ENCODE measurements at regions of chr15 and their contacts with region 1.

Region 1: DNA sequence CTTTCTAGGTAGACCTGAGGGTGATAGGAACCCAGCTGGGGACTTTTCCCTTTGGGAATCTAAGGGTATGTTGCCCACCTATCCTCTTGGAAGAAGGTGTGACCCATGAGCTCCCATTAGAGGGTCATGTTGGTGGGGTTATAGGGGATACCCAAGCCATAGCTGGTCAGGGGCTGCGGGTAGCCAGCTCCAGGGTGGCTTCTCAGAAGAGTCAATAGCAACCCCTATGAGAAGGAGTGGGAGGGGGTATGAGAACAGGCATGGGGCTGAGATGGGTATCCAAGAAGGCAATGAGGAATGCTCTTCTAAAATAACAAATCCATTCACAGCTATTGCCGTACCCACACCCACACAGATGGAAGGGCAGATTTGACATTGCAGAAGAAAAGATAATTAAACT is 217.8 kb downstream of the UACA start:
- DNase-seq: no peak
- H3K4me3 Mint-ChIP-seq: no peak overlapping the region
- H3K27ac Mint-ChIP-seq: no peak overlapping the region
- H3K4me1 Mint-ChIP-seq: peaks cover 31% of the 10 kb centered on the region
- H3K27me3 Mint-ChIP-seq: peaks cover 12% of the 10 kb centered on the region

Region 2: DNA sequence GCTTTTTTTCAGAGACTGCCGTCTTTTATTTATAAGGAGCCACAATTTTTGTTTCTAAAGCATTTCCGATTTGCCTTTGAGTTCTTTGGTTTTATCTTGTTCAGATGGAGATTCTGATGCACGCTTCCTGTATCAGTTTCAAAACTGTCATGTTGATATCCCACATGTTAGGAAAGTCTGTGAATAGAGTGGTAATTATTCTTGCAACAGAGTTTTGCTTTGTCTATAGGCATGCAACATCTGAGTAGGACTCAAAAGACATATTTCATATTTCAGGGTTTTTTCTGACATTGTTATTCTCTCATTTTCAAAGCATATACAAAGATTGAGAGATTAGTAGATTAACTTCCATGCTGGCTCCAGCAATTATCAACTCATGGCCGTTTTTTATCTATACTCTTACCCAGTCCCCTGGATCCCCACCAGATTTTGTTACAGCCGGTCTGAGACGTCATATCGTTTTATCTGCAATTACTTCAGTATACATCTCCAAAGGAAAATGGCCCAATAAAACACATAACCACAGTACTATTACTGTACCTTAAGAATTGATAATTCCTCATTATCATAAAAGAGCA is 1224.5 kb before region 1 on chr15:
- intact Hi-C with region 1: loop called (anchors 5 kb)
- DNase-seq: no peak
- H3K4me3 Mint-ChIP-seq: no peak overlapping the region
- H3K27ac Mint-ChIP-seq: peak overlapping the region; percentile 50
- H3K4me1 Mint-ChIP-seq: peaks cover 21% of the 10 kb centered on the region
- H3K27me3 Mint-ChIP-seq: peaks cover 40% of the 10 kb centered on the region

Region 3: DNA sequence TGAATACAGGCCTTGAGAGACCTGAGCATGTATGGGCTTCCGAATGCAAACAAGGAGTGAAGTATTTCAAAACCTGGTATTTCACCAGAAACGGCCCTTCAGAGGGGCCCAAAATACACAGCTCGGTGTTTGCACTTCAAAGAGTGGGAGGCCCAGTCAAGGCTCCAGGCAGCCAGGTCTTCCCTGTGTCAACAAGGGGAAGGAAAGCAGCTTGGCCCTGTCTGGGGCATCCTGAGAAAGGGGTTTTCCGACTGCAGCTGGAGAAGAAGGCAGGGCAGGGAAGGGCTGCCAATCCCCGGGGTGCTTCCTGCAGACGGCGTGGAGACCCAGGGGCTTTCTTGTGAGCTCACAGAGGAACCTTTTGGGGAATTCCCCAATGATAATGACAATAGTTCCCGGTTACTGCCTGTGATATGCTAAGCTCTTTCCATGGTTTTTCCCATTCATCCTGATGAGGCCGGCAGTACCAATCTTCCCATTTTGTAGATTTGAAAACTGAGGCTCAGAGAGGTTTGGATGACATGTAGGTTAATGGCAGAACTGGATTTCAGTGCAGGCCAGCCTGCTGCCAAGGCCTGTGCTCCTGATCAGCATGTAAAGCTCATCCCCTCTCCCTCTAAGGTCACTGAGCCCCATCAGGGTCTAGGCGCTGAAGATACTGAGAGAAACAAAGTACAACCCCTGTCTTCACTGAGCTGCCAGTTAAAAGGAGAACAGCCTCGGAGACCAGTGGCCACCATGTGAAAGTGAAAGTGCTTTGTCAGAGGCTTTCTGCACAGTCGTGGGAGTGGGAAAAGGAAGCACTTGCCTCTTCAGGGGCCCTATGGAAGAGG is 404.8 kb before region 1 on chr15:
- intact Hi-C with region 1: loop called (anchors 1 kb)
- DNase-seq: no peak
- H3K4me3 Mint-ChIP-seq: no peak overlapping the region
- H3K27ac Mint-ChIP-seq: peak overlapping the region; percentile 40
- H3K4me1 Mint-ChIP-seq: peaks cover 34% of the 10 kb centered on the region
- H3K27me3 Mint-ChIP-seq: peaks cover 56% of the 10 kb centered on the region

Region 4: GRCh38 chr15:70463460-70463881 is 82.1 kb before region 1 on chr15:
- intact Hi-C with region 1: no loop called
- DNase-seq: no peak
- H3K4me3 Mint-ChIP-seq: no peak overlapping the region
- H3K27ac Mint-ChIP-seq: no peak overlapping the region
- H3K4me1 Mint-ChIP-seq: peaks cover 16% of the 10 kb centered on the region
- H3K27me3 Mint-ChIP-seq: peaks cover 74% of the 10 kb centered on the region

Region 5: DNA sequence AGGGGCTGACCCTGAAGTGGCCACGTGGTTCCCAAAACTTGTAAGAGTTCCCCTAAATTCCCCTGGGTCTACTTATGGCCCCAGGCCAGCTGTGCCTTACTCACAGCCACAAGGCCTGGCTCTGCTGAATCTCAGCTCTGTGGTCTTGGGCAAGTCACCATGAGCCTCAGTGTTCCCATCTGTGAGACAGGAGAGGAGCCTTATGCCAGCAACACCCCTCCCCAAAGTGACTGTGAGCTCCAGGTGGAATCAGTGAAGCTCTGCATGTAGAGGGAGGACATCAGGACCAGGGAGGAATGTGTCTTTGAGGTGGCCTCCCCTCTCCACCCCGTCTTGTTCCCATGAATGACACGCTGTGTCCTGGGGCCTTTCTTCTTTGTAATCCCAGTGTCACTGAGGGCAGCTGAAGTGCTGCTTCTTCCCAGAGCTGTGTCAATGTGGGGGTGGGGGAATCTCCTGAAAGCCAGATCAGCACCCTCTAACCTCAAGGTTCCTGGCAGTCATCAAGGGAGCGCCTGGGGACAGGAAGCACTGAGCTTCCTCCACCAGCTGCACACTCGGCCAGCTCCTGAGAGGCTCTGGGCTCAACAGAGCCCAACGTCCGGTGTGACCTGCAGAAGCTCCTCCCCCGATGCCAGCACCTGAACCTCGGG is 41.1 kb before region 1 on chr15:
- intact Hi-C with region 1: loop called (anchors 5 kb)
- DNase-seq: no peak
- H3K4me3 Mint-ChIP-seq: peak overlapping the region; percentile 14
- H3K27ac Mint-ChIP-seq: peak overlapping the region; percentile 64
- H3K4me1 Mint-ChIP-seq: peaks cover 63% of the 10 kb centered on the region
- H3K27me3 Mint-ChIP-seq: peaks cover 19% of the 10 kb centered on the region

Measured in activated T-helper 2 cell treated with anti-CD3 and anti-CD28 coated beads, Interferon-gamma antibody, Interleukin-2, Interleukin-4, amounts not matched to agents 10 μg/mL and 5 μg/mL and 100 μg/mL, durations not matched to agents 14 hours and 24 hours and 36 hours (primary cell).